Activated naive CD4-positive, alpha-beta T cell treated with anti-CD3 and anti-CD28 coated beads for 36 hours (primary cell): ENCODE measurements at regions of chr10 and their contacts with region 1.

Region 1: DNA sequence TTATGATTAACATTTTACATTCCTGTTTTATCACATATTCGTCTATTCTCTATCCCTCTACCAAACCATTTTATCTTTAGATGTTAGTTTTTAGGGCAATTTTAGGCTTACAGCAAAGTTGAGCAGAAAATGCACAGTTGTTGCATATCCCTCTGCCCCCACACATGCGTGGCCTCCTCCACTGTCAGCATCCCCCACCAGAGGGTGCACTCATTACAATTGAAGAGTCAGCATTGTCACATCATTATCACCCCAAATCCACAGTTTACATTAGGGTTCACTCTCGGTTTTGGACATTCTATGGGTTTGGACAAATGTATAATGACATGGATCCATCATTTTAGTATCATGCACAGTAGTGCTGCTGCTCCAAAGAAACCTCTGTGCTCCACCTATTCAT is 86.4 kb downstream of the WDR37 start:
- DNase-seq: peak; percentile 40
- H3K4me3 Mint-ChIP-seq: no peak overlapping the region
- H3K27ac Mint-ChIP-seq: no peak overlapping the region
- H3K4me1 Mint-ChIP-seq: no peaks in the 10 kb centered on the region
- H3K27me3 Mint-ChIP-seq: peaks cover 4% of the 10 kb centered on the region

Region 2: DNA sequence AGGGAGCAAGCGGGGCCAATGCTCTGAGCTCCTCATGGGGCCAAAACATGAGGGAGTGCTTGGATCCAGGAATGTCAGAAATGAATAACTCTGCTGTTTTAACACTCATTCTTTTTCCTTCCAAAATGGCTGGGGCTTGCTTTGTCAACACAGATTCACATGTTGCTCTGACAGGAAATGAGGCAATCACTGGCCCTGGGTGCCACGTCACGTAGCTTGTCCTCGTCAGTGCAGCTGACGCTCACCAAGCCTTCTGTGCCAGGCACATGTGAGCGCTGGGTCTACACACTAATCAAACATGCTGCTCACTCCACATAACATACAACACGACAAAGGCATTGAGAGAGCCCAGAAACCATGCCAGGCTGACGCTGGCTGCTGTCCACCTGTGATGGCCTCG is 112.5 kb after region 1 on chr10:
- CTCF ChIA-PET with region 1: no interaction called
- intact Hi-C with region 1: no loop called
- DNase-seq: peak; percentile 70
- H3K4me3 Mint-ChIP-seq: no peak overlapping the region
- H3K27ac Mint-ChIP-seq: no peak overlapping the region
- H3K4me1 Mint-ChIP-seq: peaks cover 48% of the 10 kb centered on the region
- H3K27me3 Mint-ChIP-seq: peaks cover 70% of the 10 kb centered on the region

Region 3: GRCh38 chr10:1387459-1387858 is 244.9 kb after region 1 on chr10:
- CTCF ChIA-PET with region 1: no interaction called
- intact Hi-C with region 1: loop called (anchors 5 kb)
- DNase-seq: no peak
- H3K4me3 Mint-ChIP-seq: no peak overlapping the region
- H3K27ac Mint-ChIP-seq: no peak overlapping the region
- H3K4me1 Mint-ChIP-seq: no peaks in the 10 kb centered on the region
- H3K27me3 Mint-ChIP-seq: no peaks in the 10 kb centered on the region